ENCODE measurements at regions of chr2 and their contacts with region 1.

Region 1: GRCh38 chr2:161946489-161947107 is 127.4 kb downstream of the DPP4 start:
- DNase-seq: no peak
- ATAC-seq: no peak
- H3K4me3 ChIP-seq: no peak overlapping the region
- H3K27ac ChIP-seq: no peak overlapping the region
- H3K4me1 ChIP-seq: no peaks in the 10 kb centered on the region
- H3K27me3 ChIP-seq: no peaks in the 10 kb centered on the region

Region 2: DNA sequence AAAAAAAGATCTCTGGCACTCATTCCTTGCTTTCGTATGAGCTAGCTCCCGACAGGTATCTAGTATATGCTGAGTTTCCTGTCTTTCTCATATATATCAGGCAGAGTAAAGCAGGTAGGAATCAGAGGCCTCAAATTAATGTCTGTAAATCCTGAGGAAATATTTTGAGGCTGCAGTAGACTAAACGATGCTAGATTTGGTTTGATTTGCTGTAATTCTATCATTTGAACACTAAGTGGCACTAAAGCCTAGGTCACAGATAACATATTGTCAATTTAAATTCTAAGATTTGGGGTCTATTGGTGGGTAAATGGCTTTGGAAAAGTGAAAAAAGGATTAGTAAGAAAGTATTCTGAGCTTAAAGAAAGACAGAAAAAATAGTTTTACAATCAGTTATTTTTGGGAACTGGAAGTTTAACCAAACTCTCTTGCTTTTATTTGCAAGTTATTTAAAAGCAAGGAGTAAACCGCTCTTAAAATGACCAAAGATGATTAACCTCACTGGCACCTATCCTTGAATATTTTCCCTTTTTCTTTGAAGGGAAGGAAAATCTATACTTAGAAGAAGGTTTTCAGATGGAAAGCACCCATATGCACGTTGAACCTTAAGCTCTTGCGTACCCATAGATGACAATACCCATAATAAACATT is 360.0 kb before region 1 on chr2:
- intact Hi-C with region 1: loop called in 1 of 4 experiments (anchors 10 kb)
- DNase-seq: no peak
- ATAC-seq: no peak
- H3K4me3 ChIP-seq: no peak overlapping the region
- H3K27ac ChIP-seq: no peak overlapping the region
- H3K4me1 ChIP-seq: no peaks in the 10 kb centered on the region
- H3K27me3 ChIP-seq: no peaks in the 10 kb centered on the region

Region 3: DNA sequence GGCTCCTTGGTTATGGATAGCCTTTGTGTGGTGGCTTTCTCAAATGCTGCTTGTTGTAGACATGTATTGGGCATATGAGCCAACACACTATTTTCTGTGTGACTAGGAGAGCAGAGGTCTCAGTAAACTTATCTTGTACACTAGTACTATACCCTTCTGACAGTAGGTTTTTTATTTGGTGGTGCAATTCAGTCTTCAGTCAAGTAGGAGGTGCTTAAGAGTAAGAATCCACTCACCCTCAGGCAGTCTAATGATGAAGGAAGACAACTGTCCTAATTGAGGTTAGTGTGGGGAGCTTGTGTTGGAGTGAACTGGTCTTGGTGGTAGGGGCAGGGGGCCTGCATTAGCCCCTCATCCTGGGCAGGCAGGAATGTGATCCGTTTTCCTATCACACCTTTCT is 158.4 kb before region 1 on chr2:
- intact Hi-C with region 1: no loop called
- DNase-seq: no peak
- ATAC-seq: no peak
- H3K4me3 ChIP-seq: no peak overlapping the region
- H3K27ac ChIP-seq: no peak overlapping the region
- H3K4me1 ChIP-seq: no peaks in the 10 kb centered on the region
- H3K27me3 ChIP-seq: no peaks in the 10 kb centered on the region